ENCODE measurements at regions of chr22 and their contacts with region 1.

Region 1: GRCh38 chr22:25447686-25448434 is 116.6 kb upstream of the GRK3 start:
- H3K4me3 ChIP-seq: peak overlapping the region; percentile 86
- H3K27ac ChIP-seq: peak overlapping the region; percentile 60; the same call in 1 of the 2 replicates
- H3K4me1 ChIP-seq: peaks cover 3% of the 10 kb centered on the region
- CTCF ChIP-seq: peak; percentile 99

Region 2: GRCh38 chr22:25362215-25362882 is 85.5 kb before region 1 on chr22:
- CTCF ChIA-PET with region 1: interaction called, 15 read pairs
- POLR2A ChIA-PET with region 1: interaction called, 3 read pairs
- H3K4me3 ChIP-seq: no peak overlapping the region
- H3K27ac ChIP-seq: no peak overlapping the region
- H3K4me1 ChIP-seq: no peaks in the 10 kb centered on the region
- CTCF ChIP-seq: peak; percentile 74

Region 3: GRCh38 chr22:25437414-25438160 is 10.3 kb before region 1 on chr22:
- CTCF ChIA-PET with region 1: interaction called, 13 read pairs
- POLR2A ChIA-PET with region 1: no interaction called
- H3K4me3 ChIP-seq: no peak overlapping the region
- H3K27ac ChIP-seq: no peak overlapping the region
- H3K4me1 ChIP-seq: no peaks in the 10 kb centered on the region
- CTCF ChIP-seq: no peak

Measured in HEK293 (cell line).